ENCODE measurements at regions of chr3 and their contacts with region 1.

Region 1: DNA sequence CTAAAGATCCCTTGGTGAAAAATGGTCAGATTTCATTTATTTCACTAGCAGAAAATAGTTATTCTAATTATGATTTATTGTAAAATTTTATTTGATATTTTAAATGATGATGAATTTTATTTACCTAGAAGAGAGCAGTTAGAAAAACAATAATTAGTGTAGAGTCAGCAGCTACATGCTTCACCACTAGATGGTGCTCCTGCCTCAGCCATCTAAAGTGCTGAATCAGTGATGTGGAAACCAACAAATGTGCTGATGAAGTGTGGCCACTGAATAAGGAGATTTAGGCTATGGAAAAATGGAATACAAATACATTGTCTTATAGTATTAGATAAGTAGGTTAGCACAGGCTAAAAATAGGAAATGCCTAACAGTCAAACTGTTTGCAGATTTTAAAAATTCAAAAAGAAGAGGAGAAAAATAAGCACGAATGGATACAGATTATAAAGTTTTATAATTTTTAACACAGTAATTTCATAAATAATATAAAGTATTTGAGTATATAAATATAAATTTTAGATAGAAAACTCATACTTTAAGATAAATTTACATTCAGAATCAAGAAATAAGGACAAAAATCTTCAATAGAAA is 109.8 kb downstream of the PPP2R3A start:
- DNase-seq: peak; percentile 58 to 89
- ATAC-seq: peak; percentile 85 to 88 (median 86)
- H3K4me3 ChIP-seq: no peak overlapping the region
- H3K4me3 Mint-ChIP-seq: no peak overlapping the region
- H3K27ac ChIP-seq: no peak overlapping the region
- H3K27ac Mint-ChIP-seq: no peak overlapping the region
- H3K4me1 ChIP-seq: no peaks in the 10 kb centered on the region
- H3K4me1 Mint-ChIP-seq: peaks cover 0 to 8% of the 10 kb centered on the region in 2 donors
- H3K27me3 ChIP-seq: no peaks in the 10 kb centered on the region
- H3K27me3 Mint-ChIP-seq: peaks cover 3 to 4% of the 10 kb centered on the region in 2 donors
- CTCF ChIP-seq: peak; percentile 99

Region 2: GRCh38 chr3:135851201-135852081 is 223.9 kb before region 1 on chr3:
- intact Hi-C with region 1: no loop called
- DNase-seq: no peak
- ATAC-seq: no peak
- H3K4me3 ChIP-seq: no peak overlapping the region
- H3K4me3 Mint-ChIP-seq: no peak overlapping the region
- H3K27ac ChIP-seq: no peak overlapping the region
- H3K27ac Mint-ChIP-seq: no peak overlapping the region
- H3K4me1 ChIP-seq: no peaks in the 10 kb centered on the region
- H3K4me1 Mint-ChIP-seq: no peaks in the 10 kb centered on the region
- H3K27me3 ChIP-seq: no peaks in the 10 kb centered on the region
- H3K27me3 Mint-ChIP-seq: peaks cover 0 to 1% of the 10 kb centered on the region in 2 donors
- CTCF ChIP-seq: no peak

Region 3: DNA sequence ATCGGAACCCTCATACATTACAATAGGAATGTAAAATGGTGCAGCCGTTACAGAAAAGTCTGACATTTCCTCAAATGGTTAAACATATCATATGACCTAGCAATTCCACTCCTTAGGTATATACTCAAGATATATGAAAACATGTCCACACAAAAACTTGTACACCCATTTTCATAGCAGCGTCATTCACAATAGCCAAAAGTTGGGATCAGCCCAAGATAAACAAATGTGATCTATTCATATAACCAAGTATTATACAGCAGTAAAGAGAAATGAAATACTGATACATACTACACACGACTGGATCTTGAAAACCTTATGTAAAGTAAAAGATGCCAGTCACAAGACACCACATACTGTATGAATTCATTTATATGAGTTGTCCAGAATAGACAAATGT is 18.5 kb after region 1 on chr3:
- intact Hi-C with region 1: no loop called
- DNase-seq: no peak
- ATAC-seq: no peak
- H3K4me3 ChIP-seq: no peak overlapping the region
- H3K4me3 Mint-ChIP-seq: no peak overlapping the region
- H3K27ac ChIP-seq: no peak overlapping the region
- H3K27ac Mint-ChIP-seq: no peak overlapping the region
- H3K4me1 ChIP-seq: no peaks in the 10 kb centered on the region
- H3K4me1 Mint-ChIP-seq: no peaks in the 10 kb centered on the region
- H3K27me3 ChIP-seq: peaks cover 2% of the 10 kb centered on the region
- H3K27me3 Mint-ChIP-seq: no peaks in the 10 kb centered on the region
- CTCF ChIP-seq: no peak

Region 4: GRCh38 chr3:136122006-136122405 is 46.7 kb after region 1 on chr3:
- intact Hi-C with region 1: no loop called
- DNase-seq: no peak
- ATAC-seq: no peak
- H3K4me3 ChIP-seq: no peak overlapping the region
- H3K4me3 Mint-ChIP-seq: no peak overlapping the region
- H3K27ac ChIP-seq: no peak overlapping the region
- H3K27ac Mint-ChIP-seq: no peak overlapping the region
- H3K4me1 ChIP-seq: no peaks in the 10 kb centered on the region
- H3K4me1 Mint-ChIP-seq: no peaks in the 10 kb centered on the region
- H3K27me3 ChIP-seq: no peaks in the 10 kb centered on the region
- H3K27me3 Mint-ChIP-seq: no peaks in the 10 kb centered on the region
- CTCF ChIP-seq: no peak

Region 5: DNA sequence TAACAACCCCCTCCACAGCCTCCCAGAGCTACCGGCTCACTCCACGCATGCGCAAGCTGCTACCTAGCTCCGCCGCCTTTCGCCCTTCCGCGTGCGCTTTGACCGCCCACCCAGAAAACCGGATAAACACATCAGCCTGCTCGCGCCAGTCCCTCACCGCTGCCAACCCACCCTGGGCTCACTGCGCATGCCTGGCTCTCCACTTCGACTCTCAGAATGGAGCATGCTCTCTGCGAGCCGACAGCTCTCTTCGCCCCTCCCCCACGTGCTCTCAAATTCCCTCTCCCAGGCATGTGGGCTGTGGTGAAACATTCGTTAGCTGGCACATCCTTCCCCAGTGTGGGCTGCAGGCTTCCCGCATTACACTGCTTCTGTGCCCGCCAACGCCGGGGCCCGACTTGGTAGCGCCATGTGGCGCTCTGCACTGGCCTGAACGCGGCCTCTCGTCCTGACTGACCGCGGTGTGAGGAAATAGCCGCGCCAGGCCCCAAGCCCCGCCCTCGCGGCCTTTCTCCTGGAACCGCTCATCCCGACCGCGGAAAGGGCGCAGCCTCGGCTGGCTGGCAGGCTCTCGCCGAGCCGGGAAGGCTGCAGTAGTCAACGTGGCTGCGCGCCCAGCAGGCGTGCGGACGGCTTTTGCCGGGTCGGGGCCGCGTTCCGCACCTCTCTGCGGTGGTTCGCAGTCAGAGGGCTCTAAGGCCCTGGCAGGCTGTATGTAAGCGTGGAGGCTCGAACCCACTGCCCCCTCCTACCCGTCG is 121.3 kb after region 1 on chr3:
- intact Hi-C with region 1: loop called (anchors 10 kb)
- DNase-seq: peak; percentile 94 to 99
- ATAC-seq: peak; percentile 62 to 76 (median 68)
- H3K4me3 ChIP-seq: peak overlapping the region; percentile 56
- H3K4me3 Mint-ChIP-seq: peak overlapping the region; percentile 99
- H3K27ac ChIP-seq: peak overlapping the region; percentile 99
- H3K27ac Mint-ChIP-seq: peak overlapping the region; percentile 98
- H3K4me1 ChIP-seq: peaks cover 8% of the 10 kb centered on the region
- H3K4me1 Mint-ChIP-seq: peaks cover 59 to 60% of the 10 kb centered on the region in 2 donors
- H3K27me3 ChIP-seq: no peaks in the 10 kb centered on the region
- H3K27me3 Mint-ChIP-seq: peaks cover 0 to 5% of the 10 kb centered on the region in 2 donors
- CTCF ChIP-seq: no peak

Region 6: DNA sequence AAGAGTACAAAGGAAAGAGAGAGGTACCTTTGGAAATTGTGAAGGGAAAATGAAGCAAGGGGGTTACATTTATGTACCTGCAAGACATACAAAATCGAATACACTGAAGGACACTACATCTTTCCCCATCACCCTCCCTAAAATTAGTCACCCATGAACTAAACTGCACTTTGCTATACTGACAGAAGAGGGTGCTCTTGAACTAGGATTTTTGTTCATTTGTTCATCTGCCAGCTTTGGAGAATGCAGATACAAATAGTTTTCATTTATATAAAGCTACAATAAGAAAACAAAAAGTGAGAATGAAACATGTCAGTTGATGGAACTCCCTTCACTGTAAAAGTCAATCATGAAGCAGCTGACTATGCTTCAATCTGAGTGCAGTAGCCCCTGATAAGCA is 230.6 kb after region 1 on chr3:
- intact Hi-C with region 1: loop called (anchors 1 kb)
- DNase-seq: no peak
- ATAC-seq: peak; percentile 48 to 64 (median 50)
- H3K4me3 ChIP-seq: no peak overlapping the region
- H3K4me3 Mint-ChIP-seq: no peak overlapping the region
- H3K27ac ChIP-seq: no peak overlapping the region
- H3K27ac Mint-ChIP-seq: no peak overlapping the region
- H3K4me1 ChIP-seq: no peaks in the 10 kb centered on the region
- H3K4me1 Mint-ChIP-seq: no peaks in the 10 kb centered on the region
- H3K27me3 ChIP-seq: no peaks in the 10 kb centered on the region
- H3K27me3 Mint-ChIP-seq: no peaks in the 10 kb centered on the region
- CTCF ChIP-seq: peak; percentile 60

Region 7: GRCh38 chr3:136545664-136546268 is 470.5 kb after region 1 on chr3:
- intact Hi-C with region 1: loop called (anchors 5 kb)
- DNase-seq: peak in 1 of 2 donors; percentile 7
- ATAC-seq: peak in 1 of 3 donors; percentile 30
- H3K4me3 ChIP-seq: no peak overlapping the region
- H3K4me3 Mint-ChIP-seq: no peak overlapping the region
- H3K27ac ChIP-seq: no peak overlapping the region
- H3K27ac Mint-ChIP-seq: peak overlapping the region; percentile 8 to 65
- H3K4me1 ChIP-seq: no peaks in the 10 kb centered on the region
- H3K4me1 Mint-ChIP-seq: peaks cover 11 to 25% of the 10 kb centered on the region in 2 donors
- H3K27me3 ChIP-seq: no peaks in the 10 kb centered on the region
- H3K27me3 Mint-ChIP-seq: no peaks in the 10 kb centered on the region
- CTCF ChIP-seq: no peak

Region 8: GRCh38 chr3:137946345-137946973 is 1871.1 kb after region 1 on chr3:
- intact Hi-C with region 1: loop called (anchors 10 kb)
- DNase-seq: peak in 1 of 2 donors; percentile 72
- ATAC-seq: peak in 2 of 3 donors; percentile 52 to 55
- H3K4me3 ChIP-seq: no peak overlapping the region
- H3K4me3 Mint-ChIP-seq: no peak overlapping the region
- H3K27ac ChIP-seq: no peak overlapping the region
- H3K27ac Mint-ChIP-seq: no peak overlapping the region
- H3K4me1 ChIP-seq: no peaks in the 10 kb centered on the region
- H3K4me1 Mint-ChIP-seq: no peaks in the 10 kb centered on the region
- H3K27me3 ChIP-seq: no peaks in the 10 kb centered on the region
- H3K27me3 Mint-ChIP-seq: peaks cover 0 to 2% of the 10 kb centered on the region in 2 donors
- CTCF ChIP-seq: peak; percentile 68

Measured in natural killer cell (primary cell).